ENCODE measurements at regions of chr22 and their contacts with region 1.

Region 1: GRCh38 chr22:22060200-22061084 is 77.9 kb upstream of the TOP3B start:
- DNase-seq: peak; percentile 20
- H3K4me3 ChIP-seq: no peak overlapping the region
- H3K27ac ChIP-seq: no peak overlapping the region
- H3K4me1 ChIP-seq: no peaks in the 10 kb centered on the region
- H3K27me3 ChIP-seq: peaks cover 17 to 19% of the 10 kb centered on the region in 2 experiments
- CTCF ChIP-seq: peak; percentile 78 to 88
- POLR2A ChIP-seq: no peak

Region 2: DNA sequence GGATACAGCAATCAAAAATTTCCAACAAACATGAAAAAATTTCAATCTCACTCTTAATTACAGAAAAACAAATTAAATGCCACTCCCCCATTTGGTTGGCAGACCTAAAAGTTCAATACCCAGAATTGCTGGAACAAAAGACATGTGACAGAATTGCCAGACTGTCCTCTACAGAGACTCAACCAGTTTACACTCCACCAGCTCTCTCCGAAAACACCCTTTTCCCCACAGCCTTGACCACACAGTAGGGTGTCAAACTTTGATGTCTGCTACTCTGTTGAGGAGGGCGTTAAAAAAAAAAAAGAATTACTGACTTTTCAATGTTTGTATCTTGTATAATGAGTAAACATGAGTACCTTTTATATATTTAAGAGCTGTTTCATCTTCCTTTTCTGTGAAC is 280.2 kb before region 1 on chr22:
- CTCF ChIA-PET with region 1: no interaction called
- POLR2A ChIA-PET with region 1: no interaction called
- dilution Hi-C with region 1: no loop called
- intact Hi-C with region 1: no loop called
- DNase-seq: no peak
- H3K4me3 ChIP-seq: no peak overlapping the region
- H3K27ac ChIP-seq: no peak overlapping the region
- H3K4me1 ChIP-seq: no peaks in the 10 kb centered on the region
- H3K27me3 ChIP-seq: no peaks in the 10 kb centered on the region
- CTCF ChIP-seq: no peak
- POLR2A ChIP-seq: no peak

Region 3: DNA sequence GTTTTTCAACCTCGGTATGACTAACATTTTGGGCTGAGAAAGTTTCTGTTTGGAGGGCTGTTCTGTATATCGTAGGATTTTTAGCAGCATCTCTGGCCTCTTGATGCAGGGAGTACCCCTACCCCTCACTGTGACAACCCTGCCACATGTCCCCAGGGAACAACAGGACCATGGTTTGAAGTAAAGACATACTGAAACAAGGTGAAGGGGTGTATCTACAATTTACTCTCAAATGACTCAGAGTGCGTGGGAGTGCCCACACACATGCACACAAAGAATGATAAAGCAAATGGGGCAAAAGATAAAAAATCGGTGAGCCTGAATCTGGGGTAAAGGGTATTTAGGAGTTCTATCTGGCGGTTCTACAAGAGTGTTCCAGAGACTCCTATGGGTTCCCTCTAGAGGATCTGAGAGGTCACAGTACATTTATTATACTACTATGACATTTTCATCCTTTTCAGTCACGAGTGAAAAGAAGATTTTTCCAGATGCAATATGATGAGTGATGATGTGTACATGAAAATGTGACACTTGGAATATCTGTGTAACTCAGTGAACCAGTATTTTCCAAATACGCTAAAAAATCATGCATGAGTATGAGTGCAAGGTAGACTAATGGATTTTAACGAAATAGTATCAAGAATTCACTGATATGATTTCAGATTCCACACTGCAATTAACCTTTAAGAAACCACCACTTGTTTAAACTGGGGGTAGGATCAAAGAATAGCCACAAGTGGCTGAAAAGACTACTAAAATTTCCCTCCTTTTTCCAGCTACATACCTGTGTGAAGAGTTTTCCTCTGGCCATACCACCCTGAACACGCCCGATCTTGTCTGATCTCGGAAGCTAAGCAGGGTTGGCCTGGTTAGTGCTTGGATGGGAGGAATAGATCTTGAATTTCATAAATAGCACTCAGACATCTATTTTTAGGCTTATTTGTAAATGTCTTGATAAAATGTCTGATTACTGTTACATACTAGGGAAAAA is 268.5 kb before region 1 on chr22:
- CTCF ChIA-PET with region 1: no interaction called
- POLR2A ChIA-PET with region 1: no interaction called
- dilution Hi-C with region 1: no loop called
- intact Hi-C with region 1: no loop called
- DNase-seq: no peak
- H3K4me3 ChIP-seq: no peak overlapping the region
- H3K27ac ChIP-seq: no peak overlapping the region
- H3K4me1 ChIP-seq: peaks cover 2% of the 10 kb centered on the region
- H3K27me3 ChIP-seq: no peaks in the 10 kb centered on the region
- CTCF ChIP-seq: no peak
- POLR2A ChIP-seq: no peak

Region 4: GRCh38 chr22:22043296-22044078 is 17.0 kb before region 1 on chr22:
- CTCF ChIA-PET with region 1: interaction called, 14 read pairs
- POLR2A ChIA-PET with region 1: no interaction called
- dilution Hi-C with region 1: no loop called
- intact Hi-C with region 1: no loop called
- DNase-seq: no peak
- H3K4me3 ChIP-seq: no peak overlapping the region
- H3K27ac ChIP-seq: no peak overlapping the region
- H3K4me1 ChIP-seq: no peaks in the 10 kb centered on the region
- H3K27me3 ChIP-seq: peaks cover 20 to 21% of the 10 kb centered on the region in 2 experiments
- CTCF ChIP-seq: no peak
- POLR2A ChIP-seq: no peak

Region 5: DNA sequence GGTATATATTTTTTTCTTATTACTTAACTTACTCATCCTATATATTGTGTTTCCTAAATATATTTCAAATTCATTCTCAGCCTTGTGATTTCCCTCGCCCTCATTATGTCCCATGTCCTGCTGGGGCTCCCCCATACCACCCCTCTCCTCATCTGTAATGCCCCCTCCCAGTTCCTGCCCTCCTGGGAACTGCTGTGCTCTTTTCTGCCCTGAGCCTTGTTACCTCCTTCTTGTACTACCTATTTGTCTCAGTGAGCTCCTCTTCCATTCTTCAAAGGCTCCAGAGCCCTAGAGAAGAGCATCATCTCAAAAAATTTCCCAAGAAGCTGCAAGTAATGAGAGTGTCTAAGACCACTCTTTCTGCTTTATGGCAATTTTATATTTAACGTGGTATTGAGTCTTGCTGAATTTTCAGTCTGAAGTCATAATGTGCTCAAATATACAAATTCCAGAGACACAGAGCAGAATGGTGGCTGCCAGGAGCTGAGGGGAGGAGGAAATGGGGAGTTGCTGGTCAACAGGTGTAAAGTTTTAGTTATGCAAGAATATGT is 11.4 kb before region 1 on chr22:
- CTCF ChIA-PET with region 1: interaction called, 14 read pairs
- POLR2A ChIA-PET with region 1: no interaction called
- dilution Hi-C with region 1: no loop called
- intact Hi-C with region 1: no loop called
- DNase-seq: no peak
- H3K4me3 ChIP-seq: no peak overlapping the region
- H3K27ac ChIP-seq: no peak overlapping the region
- H3K4me1 ChIP-seq: no peaks in the 10 kb centered on the region
- H3K27me3 ChIP-seq: peaks cover 16 to 23% of the 10 kb centered on the region in 2 experiments
- CTCF ChIP-seq: no peak
- POLR2A ChIP-seq: no peak

Region 6: DNA sequence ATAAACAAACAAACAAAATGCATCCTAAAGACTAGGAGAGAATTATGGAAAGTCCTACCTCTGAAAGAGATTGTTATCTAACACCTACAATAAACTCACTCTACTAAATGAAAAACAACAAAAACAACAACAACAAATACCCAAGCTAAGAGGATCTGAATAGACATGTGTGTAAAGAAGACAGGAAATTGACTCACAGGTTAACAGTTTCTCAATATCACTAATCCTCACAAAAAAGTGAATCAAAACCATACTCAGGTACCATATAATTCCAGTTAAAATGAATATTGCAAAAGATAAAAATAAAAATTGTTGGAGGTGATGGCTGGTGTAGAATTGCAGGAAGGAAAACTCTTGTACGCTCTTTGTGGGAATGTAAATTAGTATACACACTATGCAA is 32.5 kb after region 1 on chr22:
- CTCF ChIA-PET with region 1: no interaction called
- POLR2A ChIA-PET with region 1: no interaction called
- dilution Hi-C with region 1: no loop called
- intact Hi-C with region 1: no loop called
- DNase-seq: no peak
- H3K4me3 ChIP-seq: no peak overlapping the region
- H3K27ac ChIP-seq: no peak overlapping the region
- H3K4me1 ChIP-seq: no peaks in the 10 kb centered on the region
- H3K27me3 ChIP-seq: peaks cover 11% of the 10 kb centered on the region in 2 experiments
- CTCF ChIP-seq: no peak
- POLR2A ChIP-seq: no peak

Measured in endothelial cell of umbilical vein (primary cell).